K562 (cell line): ENCODE measurements at regions of chr16 and their contacts with region 1.

Region 1: GRCh38 chr16:14529010-14529669 is 100.9 kb downstream of the PARN start:
- DNase-seq: peak; percentile 64 to 93 (median 68)
- ATAC-seq: peak; percentile 94
- H3K4me3 ChIP-seq: no peak overlapping the region
- H3K27ac ChIP-seq: peak overlapping the region; percentile 75
- H3K4me1 ChIP-seq: peaks cover 0 to 22% of the 10 kb centered on the region in 2 experiments; a peak in 4 of 5 replicates
- H3K27me3 ChIP-seq: no peaks in the 10 kb centered on the region
- CTCF ChIP-seq: peak; percentile 73 to 90 (median 81)
- EP300 ChIP-seq: no peak
- POLR2A ChIP-seq: no peak
- RAD21 ChIP-seq: peak; percentile 92 to 96

Region 2: DNA sequence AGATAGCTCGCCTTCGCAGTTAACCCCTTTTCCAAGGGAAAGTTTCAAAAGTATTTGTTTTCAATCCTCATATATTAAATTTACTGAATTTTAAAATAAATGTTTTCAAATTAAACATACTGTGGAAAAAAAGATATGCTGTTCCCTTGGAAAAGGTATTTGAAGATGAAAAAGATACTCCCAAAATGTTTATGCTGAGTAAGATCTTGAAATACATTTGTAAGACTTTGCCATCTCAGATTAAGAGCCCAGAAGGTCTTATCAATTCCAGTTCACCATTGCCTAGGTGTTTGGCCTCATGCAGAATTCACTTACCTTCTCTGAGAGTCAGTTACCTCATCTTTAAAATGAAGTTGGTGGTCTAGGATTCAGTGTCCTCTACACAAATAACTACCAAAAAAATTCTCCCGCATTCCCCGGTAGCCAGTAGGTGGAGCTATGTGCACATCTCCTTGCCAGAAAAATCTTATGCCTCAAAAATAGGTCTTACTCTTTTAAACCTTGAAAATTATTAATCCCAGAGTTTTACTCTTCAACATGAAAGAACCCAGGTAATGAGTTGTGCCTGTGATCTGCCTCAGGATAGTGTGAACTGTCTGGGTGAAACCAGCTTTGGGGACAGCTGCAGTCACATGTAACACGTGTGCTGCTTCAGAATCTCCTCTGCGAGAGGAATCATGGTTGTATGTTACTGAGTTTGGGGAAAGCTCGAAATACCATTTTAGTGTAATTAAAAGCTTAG is 279.7 kb before region 1 on chr16:
- CTCF ChIA-PET with region 1: interaction called, 20 read pairs
- POLR2A ChIA-PET with region 1: no interaction called
- in situ Hi-C with region 1: no loop called
- intact Hi-C with region 1: loop called (anchors 2 kb)
- DNase-seq: peak; percentile 34 to 58 (median 40)
- ATAC-seq: no peak
- H3K4me3 ChIP-seq: no peak overlapping the region
- H3K27ac ChIP-seq: no peak overlapping the region
- H3K4me1 ChIP-seq: no peaks in the 10 kb centered on the region
- H3K27me3 ChIP-seq: no peaks in the 10 kb centered on the region
- CTCF ChIP-seq: peak; percentile 64 to 85 (median 83)
- EP300 ChIP-seq: no peak
- POLR2A ChIP-seq: no peak
- RAD21 ChIP-seq: peak; percentile 61 to 72

Region 3: DNA sequence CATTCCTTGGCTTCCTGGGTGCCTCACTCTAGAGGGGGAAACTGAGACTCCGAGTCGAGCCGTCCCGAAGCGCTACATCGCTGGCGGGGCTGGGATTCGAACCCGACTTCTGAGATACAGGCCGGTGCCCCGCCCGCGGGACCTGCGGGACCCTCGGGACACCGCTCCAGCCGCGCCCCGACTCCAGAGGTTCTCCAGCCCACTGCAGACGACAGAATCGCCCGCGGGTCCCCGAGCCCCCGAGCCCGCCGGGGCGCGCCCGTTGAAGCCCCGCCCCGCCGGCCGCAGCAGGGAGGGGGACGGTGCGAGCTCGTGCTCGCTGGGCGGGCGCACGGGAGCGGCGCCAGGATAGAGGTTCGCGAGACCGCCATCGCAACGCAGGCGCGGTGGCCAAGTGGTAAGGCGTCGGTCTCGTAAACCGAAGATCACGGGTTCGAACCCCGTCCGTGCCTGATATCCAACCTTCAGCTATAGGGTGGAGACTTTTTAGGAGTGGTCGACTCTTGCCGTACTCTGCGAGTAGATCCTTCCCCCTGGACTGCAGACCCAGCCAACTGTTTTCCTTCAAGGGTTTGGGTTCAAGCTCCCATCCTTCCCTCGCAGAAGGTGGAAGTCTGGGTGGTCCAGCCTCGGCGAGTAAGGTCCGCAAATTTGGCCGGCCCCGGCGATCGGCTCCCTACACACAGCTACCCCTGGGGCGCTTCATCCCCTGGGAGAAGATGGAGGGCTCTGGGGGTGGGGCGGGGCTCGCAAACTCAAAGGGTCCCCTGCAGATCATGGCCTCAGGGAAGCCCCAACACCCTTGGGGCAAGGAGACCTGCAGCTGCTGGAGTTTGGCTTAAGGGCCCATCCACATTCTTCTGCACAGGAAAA is 243.4 kb before region 1 on chr16:
- CTCF ChIA-PET with region 1: interaction called, 5 read pairs
- POLR2A ChIA-PET with region 1: interaction called, 3 read pairs
- in situ Hi-C with region 1: loop called (anchors 5 kb)
- intact Hi-C with region 1: no loop called
- DNase-seq: peak; percentile 90 to 97 (median 92)
- ATAC-seq: peak; percentile 92
- H3K4me3 ChIP-seq: peak overlapping the region; percentile 98
- H3K27ac ChIP-seq: peak overlapping the region; percentile 72
- H3K4me1 ChIP-seq: peaks cover 3 to 15% of the 10 kb centered on the region in 2 experiments; a peak in 4 of 5 replicates
- H3K27me3 ChIP-seq: no peaks in the 10 kb centered on the region
- CTCF ChIP-seq: no peak
- EP300 ChIP-seq: peak; percentile 59; the same call in 1 of the 2 replicates
- POLR2A ChIP-seq: no peak
- RAD21 ChIP-seq: 0 out of 4 replicates have a peak, but pooled peaks of 1 of the 2 experiments have one; percentile 10

Region 4: GRCh38 chr16:14300705-14301168 is 228.4 kb before region 1 on chr16:
- CTCF ChIA-PET with region 1: interaction called, 13 read pairs
- POLR2A ChIA-PET with region 1: interaction called, 3 read pairs
- in situ Hi-C with region 1: no loop called
- intact Hi-C with region 1: loop called (anchors 1 kb)
- DNase-seq: peak; percentile 52 to 86 (median 58)
- ATAC-seq: peak; percentile 84
- H3K4me3 ChIP-seq: peak overlapping the region; percentile 49; the same call in 1 of the 2 replicates
- H3K27ac ChIP-seq: no peak overlapping the region
- H3K4me1 ChIP-seq: peaks cover 13 to 37% of the 10 kb centered on the region in 2 experiments; a peak in 4 of 5 replicates
- H3K27me3 ChIP-seq: no peaks in the 10 kb centered on the region
- CTCF ChIP-seq: peak; percentile 80 to 92 (median 82)
- EP300 ChIP-seq: no peak
- POLR2A ChIP-seq: no peak
- RAD21 ChIP-seq: peak; percentile 60 to 89

Region 5: GRCh38 chr16:14378131-14378551 is 151.0 kb before region 1 on chr16:
- CTCF ChIA-PET with region 1: no interaction called
- POLR2A ChIA-PET with region 1: interaction called, 3 read pairs
- in situ Hi-C with region 1: no loop called
- intact Hi-C with region 1: loop called (anchors 10 kb)
- DNase-seq: peak; percentile 58 to 72 (median 70)
- ATAC-seq: peak; percentile 95
- H3K4me3 ChIP-seq: no peak overlapping the region
- H3K27ac ChIP-seq: no peak overlapping the region
- H3K4me1 ChIP-seq: peaks cover 5 to 13% of the 10 kb centered on the region in 2 experiments
- H3K27me3 ChIP-seq: peaks cover 0 to 21% of the 10 kb centered on the region in 2 experiments; a peak in 1 of 5 replicates
- CTCF ChIP-seq: no peak
- EP300 ChIP-seq: no peak
- POLR2A ChIP-seq: no peak
- RAD21 ChIP-seq: no peak